PC-3 (cell line): ENCODE measurements at regions of chr11 and their contacts with region 1.

Region 1: GRCh38 chr11:86608251-86608799 is 64.1 kb downstream of the ME3 start:
- DNase-seq: peak; percentile 82
- ATAC-seq: peak; percentile 39; the same call in 1 of the 2 replicates
- H3K4me3 ChIP-seq: no peak overlapping the region
- H3K27ac ChIP-seq: peak overlapping the region; percentile 85
- H3K4me1 ChIP-seq: peaks cover 35% of the 10 kb centered on the region
- H3K27me3 ChIP-seq: no peaks in the 10 kb centered on the region
- CTCF ChIP-seq: peak; percentile 96

Region 2: GRCh38 chr11:86592659-86593451 is 15.5 kb before region 1 on chr11:
- CTCF ChIA-PET with region 1: no interaction called
- POLR2A ChIA-PET with region 1: interaction called, 3 read pairs
- intact Hi-C with region 1: loop called (anchors 2 kb)
- DNase-seq: peak; percentile 96
- ATAC-seq: peak; percentile 79
- H3K4me3 ChIP-seq: no peak overlapping the region
- H3K27ac ChIP-seq: peak overlapping the region; percentile 95
- H3K4me1 ChIP-seq: peaks cover 39% of the 10 kb centered on the region
- H3K27me3 ChIP-seq: no peaks in the 10 kb centered on the region
- CTCF ChIP-seq: no peak

Region 3: DNA sequence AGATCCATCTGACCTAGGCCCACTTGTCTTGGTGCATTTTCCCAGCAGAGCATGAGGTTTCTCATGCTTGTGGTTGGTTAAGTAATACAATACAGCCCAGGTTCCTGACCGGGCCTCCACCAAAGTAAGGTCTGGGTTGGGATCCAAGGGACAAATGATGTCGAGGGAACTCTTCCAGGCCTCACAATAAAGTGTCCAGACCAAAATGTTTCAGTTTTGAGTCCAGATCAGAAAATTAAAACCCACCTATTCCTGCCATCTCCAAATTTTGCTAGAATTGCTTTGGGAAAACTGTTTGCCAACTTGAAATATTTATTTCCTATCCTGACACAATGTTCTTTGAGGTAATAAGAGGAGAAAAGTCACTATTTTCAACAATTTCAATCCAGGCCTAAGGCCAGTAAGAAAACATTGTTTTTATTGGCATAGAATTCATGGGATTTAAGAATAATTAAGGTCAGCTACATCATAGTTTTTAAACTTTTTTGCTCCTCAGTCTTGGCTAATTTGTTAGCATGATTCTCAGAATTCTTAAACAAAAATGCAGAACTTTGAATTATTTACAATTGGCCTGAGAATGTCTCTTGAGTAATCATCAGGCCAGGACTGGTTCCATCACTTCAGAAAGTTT is 12.7 kb after region 1 on chr11:
- CTCF ChIA-PET with region 1: no interaction called
- POLR2A ChIA-PET with region 1: no interaction called
- intact Hi-C with region 1: no loop called
- DNase-seq: no peak
- ATAC-seq: no peak
- H3K4me3 ChIP-seq: no peak overlapping the region
- H3K27ac ChIP-seq: no peak overlapping the region
- H3K4me1 ChIP-seq: no peaks in the 10 kb centered on the region
- H3K27me3 ChIP-seq: no peaks in the 10 kb centered on the region
- CTCF ChIP-seq: no peak